ENCODE measurements at regions of chr1 and their contacts with region 1.

Region 1: DNA sequence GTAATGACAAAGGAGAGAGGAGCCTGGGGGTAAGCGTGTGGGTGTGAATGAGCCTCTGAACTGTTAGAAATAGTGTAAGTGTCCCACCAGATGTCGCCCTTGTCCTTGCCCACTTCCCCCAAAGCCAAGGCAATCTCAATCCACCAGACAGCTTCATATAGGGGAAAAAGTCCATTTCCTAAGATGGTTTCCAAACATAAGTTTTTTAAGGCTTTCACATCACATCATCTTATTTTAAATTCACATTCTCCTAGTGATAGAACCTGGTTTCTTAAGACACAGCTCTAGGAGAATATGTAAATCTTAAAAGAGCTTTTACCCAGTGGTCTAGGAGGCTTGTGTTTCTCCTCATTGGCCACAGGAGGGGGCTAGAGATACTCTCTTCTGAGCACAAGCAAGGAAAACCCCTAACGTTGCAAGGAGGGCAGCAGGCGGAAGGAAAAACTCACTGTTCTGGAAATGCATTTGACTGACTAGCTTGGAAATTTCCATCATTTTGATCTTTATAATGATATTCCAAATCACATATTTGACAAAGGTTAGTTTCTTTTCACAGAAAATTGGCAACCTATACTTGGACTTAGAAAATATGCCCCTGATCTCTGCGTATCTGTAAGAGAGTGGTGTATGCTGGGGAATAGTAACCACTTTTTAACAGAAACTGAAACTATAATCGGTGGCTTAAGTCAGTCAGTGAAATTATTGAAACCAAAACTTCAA is 51.9 kb upstream of the LPAR3 start:
- DNase-seq: peak; percentile 75
- ATAC-seq: peak; percentile 92
- H3K4me3 Mint-ChIP-seq: peak overlapping the region; percentile 65
- H3K27ac Mint-ChIP-seq: peak overlapping the region; percentile 89
- H3K4me1 Mint-ChIP-seq: peaks cover 26% of the 10 kb centered on the region
- H3K27me3 Mint-ChIP-seq: no peaks in the 10 kb centered on the region

Region 2: GRCh38 chr1:84442256-84442655 is 502.7 kb before region 1 on chr1:
- CTCF ChIA-PET with region 1: no interaction called
- POLR2A ChIA-PET with region 1: no interaction called
- intact Hi-C with region 1: no loop called
- DNase-seq: no peak
- ATAC-seq: peak; percentile 99
- H3K4me3 Mint-ChIP-seq: no peak overlapping the region
- H3K27ac Mint-ChIP-seq: no peak overlapping the region
- H3K4me1 Mint-ChIP-seq: peaks cover 23% of the 10 kb centered on the region
- H3K27me3 Mint-ChIP-seq: peaks cover 5% of the 10 kb centered on the region

Region 3: GRCh38 chr1:84959294-84959693 is 14.4 kb after region 1 on chr1:
- CTCF ChIA-PET with region 1: interaction called, 47 read pairs
- POLR2A ChIA-PET with region 1: no interaction called
- intact Hi-C with region 1: loop called (anchors 1 kb)
- DNase-seq: peak; percentile 77
- ATAC-seq: peak; percentile 97
- H3K4me3 Mint-ChIP-seq: peak overlapping the region; percentile 7
- H3K27ac Mint-ChIP-seq: peak overlapping the region; percentile 87
- H3K4me1 Mint-ChIP-seq: peaks cover 33% of the 10 kb centered on the region
- H3K27me3 Mint-ChIP-seq: peaks cover 2% of the 10 kb centered on the region

Region 4: DNA sequence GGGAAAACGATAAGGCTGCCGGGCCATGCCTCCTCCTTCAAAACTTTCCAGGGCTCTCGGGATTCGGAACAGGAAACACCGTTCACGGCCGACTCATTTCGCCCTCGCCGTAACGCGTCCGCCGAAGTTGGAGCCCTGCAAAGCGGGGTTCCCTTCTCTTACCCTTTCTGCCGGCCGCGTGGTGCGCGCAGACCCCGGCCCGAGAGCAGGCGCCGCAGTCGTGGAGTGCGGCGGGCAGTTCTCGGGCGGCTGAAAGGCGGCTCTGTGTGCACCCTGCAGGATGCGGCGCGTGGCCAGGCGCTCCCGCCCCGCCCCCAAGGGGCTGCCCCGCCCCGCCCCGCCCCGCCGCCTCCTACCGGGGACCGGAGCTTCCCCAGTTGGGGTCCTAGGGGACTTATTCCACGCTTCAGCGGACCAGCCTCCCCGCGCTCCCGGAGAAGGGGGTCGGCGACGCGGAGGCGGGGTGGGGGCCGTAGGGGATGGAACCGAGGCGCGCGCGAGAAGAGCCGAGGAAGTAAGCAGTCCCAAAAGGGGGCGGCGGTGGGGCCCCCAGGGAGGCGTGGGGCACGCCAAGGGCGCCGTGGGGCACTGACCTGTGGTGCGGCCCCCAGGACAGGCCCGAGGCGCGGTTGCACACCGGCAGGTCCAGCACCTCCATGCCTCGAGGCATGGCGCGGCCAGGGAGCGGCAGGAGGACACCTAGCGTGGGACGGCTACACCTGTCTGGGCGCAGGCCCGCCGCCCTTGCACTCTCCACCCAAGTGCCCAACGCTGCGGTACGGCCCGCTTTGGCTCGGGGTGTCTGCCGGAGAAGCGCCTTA is 52.1 kb after region 1 on chr1 and contains the start of gene MCOLN2:
- CTCF ChIA-PET with region 1: interaction called, 13 read pairs
- POLR2A ChIA-PET with region 1: interaction called, 3 read pairs
- intact Hi-C with region 1: loop called (anchors 1 kb)
- DNase-seq: peak; percentile 75
- ATAC-seq: peak; percentile 54
- H3K4me3 Mint-ChIP-seq: peak within 1 kb of the TSS; percentile 80
- H3K27ac Mint-ChIP-seq: peak within 1 kb of the TSS; percentile 81
- H3K4me1 Mint-ChIP-seq: peaks cover 45% of the 10 kb centered on the region
- H3K27me3 Mint-ChIP-seq: peaks cover 22% of the 10 kb centered on the region
- total RNA-seq, gene MCOLN2: 32.9 to 43.5 TPM

Region 5: DNA sequence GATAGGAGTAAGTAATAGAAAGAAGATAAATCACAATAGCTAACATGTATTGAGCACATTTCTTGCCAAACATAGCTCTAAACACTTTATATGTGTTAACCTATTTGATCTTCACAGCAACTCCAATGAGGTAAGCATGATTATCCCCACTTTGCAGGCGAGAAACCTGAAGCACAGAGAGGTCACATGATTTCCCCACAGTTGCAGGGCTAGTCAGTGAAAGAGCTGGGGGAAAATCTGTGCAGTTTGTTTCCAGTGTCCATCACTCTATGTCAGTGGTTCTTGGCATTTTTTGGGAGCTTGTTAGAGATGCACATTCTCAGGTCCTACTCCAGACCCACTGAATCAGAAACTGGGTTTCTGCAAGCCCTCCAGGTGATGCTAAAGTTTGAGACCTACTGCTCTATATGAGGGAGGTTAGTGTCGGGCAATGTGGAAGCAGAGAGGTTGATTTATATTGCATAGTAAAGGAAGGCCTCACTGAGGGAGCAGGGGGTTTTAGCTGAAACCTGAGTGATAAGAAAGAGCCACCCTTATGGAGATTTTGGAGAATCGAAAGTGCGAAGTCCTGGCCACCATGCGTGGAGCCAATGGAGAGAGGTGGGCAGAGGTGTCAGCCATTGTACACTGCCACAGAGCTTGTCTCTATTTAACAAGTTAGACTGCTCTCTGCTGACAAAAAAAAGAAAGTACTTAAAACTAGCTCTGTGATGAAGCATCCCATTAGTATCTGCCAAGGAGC is 82.5 kb after region 1 on chr1:
- CTCF ChIA-PET with region 1: interaction called, 44 read pairs
- POLR2A ChIA-PET with region 1: interaction called, 5 read pairs
- intact Hi-C with region 1: loop called (anchors 1 kb)
- DNase-seq: peak; percentile 21
- ATAC-seq: peak; percentile 84
- H3K4me3 Mint-ChIP-seq: no peak overlapping the region
- H3K27ac Mint-ChIP-seq: peak overlapping the region; percentile 70
- H3K4me1 Mint-ChIP-seq: peaks cover 10% of the 10 kb centered on the region
- H3K27me3 Mint-ChIP-seq: no peaks in the 10 kb centered on the region

Region 6: GRCh38 chr1:85109475-85109874 is 164.5 kb after region 1 on chr1:
- CTCF ChIA-PET with region 1: interaction called, 5 read pairs
- POLR2A ChIA-PET with region 1: no interaction called
- intact Hi-C with region 1: loop called in 1 of 2 experiments (anchors 10 kb)
- DNase-seq: peak; percentile 58
- ATAC-seq: peak; percentile 78
- H3K4me3 Mint-ChIP-seq: no peak overlapping the region
- H3K27ac Mint-ChIP-seq: no peak overlapping the region
- H3K4me1 Mint-ChIP-seq: no peaks in the 10 kb centered on the region
- H3K27me3 Mint-ChIP-seq: peaks cover 5% of the 10 kb centered on the region

Region 7: DNA sequence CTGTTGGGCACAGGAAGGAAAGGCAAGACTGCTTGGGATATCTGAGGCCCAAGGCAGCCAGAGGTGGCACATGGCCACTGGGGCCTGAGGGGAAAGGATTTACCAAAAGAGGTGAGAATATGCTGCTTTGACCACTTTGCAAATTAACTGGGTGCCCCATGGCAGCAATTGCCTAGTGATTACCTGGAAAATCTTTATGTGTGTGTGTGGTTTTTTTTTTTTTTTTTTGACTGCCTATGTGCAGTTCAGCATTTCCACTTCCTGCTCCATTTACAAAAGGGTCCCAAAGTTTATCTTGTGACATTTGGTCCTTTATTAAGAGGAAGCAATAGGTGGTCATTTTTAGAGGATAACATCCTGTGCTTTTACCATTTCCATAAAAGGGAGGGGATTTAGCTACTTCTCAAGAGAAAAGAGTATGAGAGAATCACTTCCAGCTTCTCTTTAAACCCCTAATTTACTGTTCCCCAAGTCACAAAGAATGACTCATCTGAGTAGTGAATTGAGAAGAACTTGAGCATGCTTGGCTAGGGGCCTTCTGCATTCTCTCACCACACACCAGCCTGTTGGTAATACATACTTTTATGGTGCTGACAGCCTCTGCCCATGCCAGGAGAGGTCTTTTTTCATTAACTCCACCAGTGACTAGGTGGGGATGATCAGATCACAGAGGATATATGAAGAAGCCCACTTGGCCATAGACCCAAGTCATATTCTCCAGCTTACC is 203.8 kb after region 1 on chr1:
- CTCF ChIA-PET with region 1: no interaction called
- POLR2A ChIA-PET with region 1: no interaction called
- intact Hi-C with region 1: no loop called
- DNase-seq: peak; percentile 41
- ATAC-seq: peak; percentile 94
- H3K4me3 Mint-ChIP-seq: no peak overlapping the region
- H3K27ac Mint-ChIP-seq: peak overlapping the region; percentile 56
- H3K4me1 Mint-ChIP-seq: peaks cover 20% of the 10 kb centered on the region
- H3K27me3 Mint-ChIP-seq: peaks cover 2% of the 10 kb centered on the region

Region 8: GRCh38 chr1:85245456-85245855 is 300.5 kb after region 1 on chr1:
- CTCF ChIA-PET with region 1: interaction called, 16 read pairs
- POLR2A ChIA-PET with region 1: no interaction called
- intact Hi-C with region 1: no loop called
- DNase-seq: no peak
- ATAC-seq: no peak
- H3K4me3 Mint-ChIP-seq: no peak overlapping the region
- H3K27ac Mint-ChIP-seq: no peak overlapping the region
- H3K4me1 Mint-ChIP-seq: peaks cover 6% of the 10 kb centered on the region
- H3K27me3 Mint-ChIP-seq: no peaks in the 10 kb centered on the region

Measured in activated CD4-positive, alpha-beta T cell treated with anti-CD3 and anti-CD28 coated beads for 36 hours (primary cell).